CD4-positive, alpha-beta T cell (primary cell): ENCODE measurements at regions of chr10 and their contacts with region 1.

Region 1: DNA sequence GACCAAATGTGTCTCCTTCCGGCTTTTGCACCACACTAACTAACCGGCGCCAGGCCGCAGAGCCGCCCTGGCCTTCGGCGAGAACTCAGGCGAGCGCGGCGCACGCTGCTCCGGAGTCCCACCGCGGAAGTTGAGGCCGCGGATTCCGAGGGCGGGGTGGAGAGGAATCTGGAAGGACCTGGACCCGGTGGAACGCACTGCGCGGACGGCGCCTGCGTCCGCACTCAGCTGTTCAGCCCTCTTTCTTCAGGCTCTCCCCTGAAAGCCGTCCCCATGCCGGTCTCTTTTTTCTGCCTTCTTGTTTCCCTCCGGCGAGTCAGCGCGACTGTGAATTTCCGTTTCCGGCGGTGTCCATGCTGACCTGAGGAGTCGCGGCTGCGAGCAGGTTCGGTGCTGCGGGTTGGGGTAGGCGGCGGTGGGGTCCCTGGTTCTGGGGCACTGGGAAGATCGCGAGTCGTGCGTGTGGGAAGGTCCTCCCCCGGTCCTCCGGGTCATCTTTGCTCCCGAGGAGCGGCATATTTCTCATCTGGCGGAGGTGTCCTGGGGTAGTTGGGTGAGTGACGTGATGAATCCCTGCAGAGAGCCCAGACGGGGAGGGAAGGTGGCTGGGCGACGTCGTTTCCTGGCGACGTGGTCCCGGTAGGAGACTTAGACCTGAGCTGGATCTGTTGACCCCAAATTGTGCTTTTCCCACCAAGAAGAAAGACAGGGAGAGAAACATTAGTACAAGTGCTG is at the start of gene BMS1:
- DNase-seq: peak; percentile 79 to 93 (median 85)
- ATAC-seq: peak; percentile 85
- H3K4me3 ChIP-seq: peak within 1 kb of the TSS; percentile 65
- H3K4me3 Mint-ChIP-seq: peak within 1 kb of the TSS; percentile 99
- H3K27ac ChIP-seq: peak within 1 kb of the TSS; percentile 65
- H3K27ac Mint-ChIP-seq: peak within 1 kb of the TSS; percentile 88
- H3K4me1 ChIP-seq: peaks cover 16% of the 10 kb centered on the region
- H3K4me1 Mint-ChIP-seq: peaks cover 34% of the 10 kb centered on the region
- H3K27me3 ChIP-seq: no peaks in the 10 kb centered on the region
- H3K27me3 Mint-ChIP-seq: peaks cover 3% of the 10 kb centered on the region
- CTCF ChIP-seq: no peak
- total RNA-seq, gene BMS1: 13.8 to 15.3 TPM

Region 2: DNA sequence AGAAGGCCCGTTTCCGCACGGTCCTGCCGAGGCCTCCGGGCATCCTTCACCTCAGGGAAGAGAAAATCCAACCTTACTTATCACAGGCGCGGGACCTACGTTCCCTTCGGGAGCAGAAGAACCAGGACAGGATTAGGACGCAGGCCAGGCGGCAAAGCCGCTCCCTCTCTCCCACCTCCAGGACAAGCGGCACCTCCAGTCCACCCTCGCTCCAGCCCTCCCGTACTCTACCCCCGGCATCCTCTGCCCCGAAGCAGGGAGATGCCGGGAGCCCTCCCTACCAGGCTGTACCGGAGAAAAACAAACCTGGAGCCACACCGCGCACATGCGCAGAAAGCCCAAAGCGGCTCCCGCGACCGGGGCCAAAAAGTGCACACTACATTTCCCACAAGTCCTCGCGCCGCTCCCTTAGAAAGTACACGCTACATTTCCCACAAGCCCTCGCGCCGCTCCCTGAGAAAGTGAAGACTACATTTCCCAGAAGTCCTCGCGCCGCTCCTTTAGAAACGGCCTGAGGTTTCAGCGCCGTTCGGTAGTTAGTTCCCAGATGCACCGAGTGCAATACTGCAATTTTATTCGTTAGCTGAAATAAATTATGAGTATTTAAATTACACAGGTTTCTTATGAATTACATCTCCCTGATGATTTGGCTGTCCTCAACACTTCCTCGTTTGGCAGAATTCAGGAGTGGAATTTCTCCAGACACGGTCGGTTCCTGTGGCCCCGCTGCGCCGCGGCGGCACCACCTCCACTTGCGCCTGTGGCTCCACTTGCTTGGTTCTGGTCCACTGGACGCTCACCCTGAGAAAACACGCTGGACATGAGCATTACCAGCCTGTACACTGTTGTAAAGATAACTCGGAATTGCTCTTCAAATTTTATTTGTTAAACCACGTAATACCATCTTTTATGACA is 229.9 kb before region 1 on chr10:
- CTCF ChIA-PET with region 1: no interaction called
- POLR2A ChIA-PET with region 1: no interaction called
- intact Hi-C with region 1: loop called in 1 of 2 experiments (anchors 1 kb)
- DNase-seq: peak; percentile 87 to 97 (median 94)
- ATAC-seq: peak; percentile 95
- H3K4me3 ChIP-seq: peak overlapping the region; percentile 85
- H3K4me3 Mint-ChIP-seq: peak overlapping the region; percentile 94
- H3K27ac ChIP-seq: peak overlapping the region; percentile 58 to 75
- H3K27ac Mint-ChIP-seq: peak overlapping the region; percentile 87
- H3K4me1 ChIP-seq: peaks cover 23% of the 10 kb centered on the region
- H3K4me1 Mint-ChIP-seq: peaks cover 46% of the 10 kb centered on the region
- H3K27me3 ChIP-seq: no peaks in the 10 kb centered on the region
- H3K27me3 Mint-ChIP-seq: no peaks in the 10 kb centered on the region
- CTCF ChIP-seq: no peak

Region 3: GRCh38 chr10:42638055-42638820 is 144.4 kb before region 1 on chr10 and contains the start of gene ZNF33B:
- CTCF ChIA-PET with region 1: no interaction called
- POLR2A ChIA-PET with region 1: interaction called, 7 read pairs
- intact Hi-C with region 1: loop called (anchors 2 kb)
- DNase-seq: peak; percentile 89 to 97 (median 94)
- ATAC-seq: peak; percentile 91
- H3K4me3 ChIP-seq: peak within 1 kb of the TSS; percentile 71
- H3K4me3 Mint-ChIP-seq: peak within 1 kb of the TSS; percentile 96
- H3K27ac ChIP-seq: peak within 1 kb of the TSS; percentile 91 to 92
- H3K27ac Mint-ChIP-seq: peak within 1 kb of the TSS; percentile 97
- H3K4me1 ChIP-seq: peaks cover 18% of the 10 kb centered on the region
- H3K4me1 Mint-ChIP-seq: peaks cover 52% of the 10 kb centered on the region
- H3K27me3 ChIP-seq: no peaks in the 10 kb centered on the region
- H3K27me3 Mint-ChIP-seq: no peaks in the 10 kb centered on the region
- CTCF ChIP-seq: no peak
- total RNA-seq, gene ZNF33B: 26.6 to 27.0 TPM

Region 4: GRCh38 chr10:42769653-42770052 is 13.0 kb before region 1 on chr10:
- CTCF ChIA-PET with region 1: no interaction called
- POLR2A ChIA-PET with region 1: no interaction called
- intact Hi-C with region 1: no loop called
- DNase-seq: no peak
- ATAC-seq: no peak
- H3K4me3 ChIP-seq: no peak overlapping the region
- H3K4me3 Mint-ChIP-seq: no peak overlapping the region
- H3K27ac ChIP-seq: no peak overlapping the region
- H3K27ac Mint-ChIP-seq: no peak overlapping the region
- H3K4me1 ChIP-seq: no peaks in the 10 kb centered on the region
- H3K4me1 Mint-ChIP-seq: no peaks in the 10 kb centered on the region
- H3K27me3 ChIP-seq: peaks cover 6 to 10% of the 10 kb centered on the region in 2 experiments
- H3K27me3 Mint-ChIP-seq: peaks cover 48% of the 10 kb centered on the region
- CTCF ChIP-seq: no peak

Region 5: DNA sequence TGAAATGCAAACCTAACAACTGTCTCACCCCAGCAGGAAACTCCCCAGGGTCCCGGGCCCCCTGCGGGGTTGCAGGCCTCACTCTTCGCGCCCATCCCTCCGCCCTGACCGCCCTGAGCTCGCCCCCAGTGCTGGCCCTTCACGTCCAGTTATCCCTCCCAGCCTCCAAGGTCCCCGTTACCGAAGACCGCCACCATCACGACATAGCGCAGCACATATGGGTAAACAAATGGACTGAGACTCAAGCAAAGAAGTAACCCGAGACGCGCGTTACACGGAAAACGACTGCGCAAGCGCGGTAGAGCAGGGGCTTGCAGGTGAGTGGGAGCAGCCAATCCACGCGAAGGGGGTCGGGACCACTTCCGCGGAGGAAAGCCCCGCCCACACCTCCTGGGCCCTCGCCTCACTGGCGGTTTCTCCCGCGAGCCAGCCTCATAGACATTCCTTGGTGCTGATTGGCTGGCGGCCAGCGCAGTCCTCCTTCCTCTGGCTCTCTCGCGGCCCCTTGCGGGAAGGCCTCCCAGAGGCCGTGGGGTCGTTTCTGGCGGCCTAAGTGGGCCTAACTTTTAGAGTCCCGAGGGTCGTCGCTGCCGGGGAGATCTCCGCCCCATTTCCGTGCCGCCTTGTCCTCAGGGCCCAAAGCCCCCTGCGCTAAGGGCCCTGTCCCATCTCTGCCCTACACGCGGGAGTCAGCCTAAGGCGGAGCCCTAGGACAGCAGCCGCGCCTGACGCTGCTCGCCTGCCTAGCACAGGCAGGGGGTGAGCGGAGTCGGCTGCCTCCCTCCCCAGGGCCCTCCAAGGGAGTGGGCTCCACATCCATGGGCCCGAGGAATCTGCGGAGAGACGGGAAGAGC is 579.6 kb after region 1 on chr10:
- CTCF ChIA-PET with region 1: no interaction called
- POLR2A ChIA-PET with region 1: no interaction called
- intact Hi-C with region 1: loop called in 1 of 2 experiments (anchors 10 kb)
- DNase-seq: peak; percentile 93 to 99 (median 98)
- ATAC-seq: peak; percentile 98
- H3K4me3 ChIP-seq: peak overlapping the region; percentile 82
- H3K4me3 Mint-ChIP-seq: peak overlapping the region; percentile 97
- H3K27ac ChIP-seq: peak overlapping the region; percentile 88 to 97
- H3K27ac Mint-ChIP-seq: peak overlapping the region; percentile 97
- H3K4me1 ChIP-seq: peaks cover 22% of the 10 kb centered on the region
- H3K4me1 Mint-ChIP-seq: peaks cover 32% of the 10 kb centered on the region
- H3K27me3 ChIP-seq: no peaks in the 10 kb centered on the region
- H3K27me3 Mint-ChIP-seq: no peaks in the 10 kb centered on the region
- CTCF ChIP-seq: peak; percentile 64

Region 6: GRCh38 chr10:43606322-43607198 is 823.9 kb after region 1 on chr10 and contains the start of gene ZNF485:
- CTCF ChIA-PET with region 1: no interaction called
- POLR2A ChIA-PET with region 1: no interaction called
- intact Hi-C with region 1: loop called in 1 of 2 experiments (anchors 10 kb)
- DNase-seq: peak; percentile 42 to 77 (median 60)
- ATAC-seq: peak; percentile 87
- H3K4me3 ChIP-seq: peak within 1 kb of the TSS; percentile 81
- H3K4me3 Mint-ChIP-seq: peak within 1 kb of the TSS; percentile 89
- H3K27ac ChIP-seq: no peak within 1 kb of the TSS
- H3K27ac Mint-ChIP-seq: peak within 1 kb of the TSS; percentile 47
- H3K4me1 ChIP-seq: peaks cover 15% of the 10 kb centered on the region
- H3K4me1 Mint-ChIP-seq: peaks cover 41% of the 10 kb centered on the region
- H3K27me3 ChIP-seq: no peaks in the 10 kb centered on the region
- H3K27me3 Mint-ChIP-seq: no peaks in the 10 kb centered on the region
- CTCF ChIP-seq: no peak
- total RNA-seq, gene ZNF485: 0.75 to 1.2 TPM

Region 7: GRCh38 chr10:43648398-43649184 is 866.0 kb after region 1 on chr10 and contains the start of gene ZNF32:
- CTCF ChIA-PET with region 1: no interaction called
- POLR2A ChIA-PET with region 1: no interaction called
- intact Hi-C with region 1: loop called in 1 of 2 experiments (anchors 2 kb)
- DNase-seq: peak; percentile 64 to 91 (median 76)
- ATAC-seq: peak; percentile 98
- H3K4me3 ChIP-seq: peak within 1 kb of the TSS; percentile 73
- H3K4me3 Mint-ChIP-seq: peak within 1 kb of the TSS; percentile 96
- H3K27ac ChIP-seq: peak within 1 kb of the TSS in 1 of 2 donors; percentile 71
- H3K27ac Mint-ChIP-seq: peak within 1 kb of the TSS; percentile 96
- H3K4me1 ChIP-seq: peaks cover 17% of the 10 kb centered on the region
- H3K4me1 Mint-ChIP-seq: peaks cover 27% of the 10 kb centered on the region
- H3K27me3 ChIP-seq: no peaks in the 10 kb centered on the region
- H3K27me3 Mint-ChIP-seq: peaks cover 3% of the 10 kb centered on the region
- CTCF ChIP-seq: no peak
- total RNA-seq, gene ZNF32: 18.7 to 19.5 TPM

Region 8: GRCh38 chr10:44557596-44558191 is 1775.1 kb after region 1 on chr10:
- CTCF ChIA-PET with region 1: no interaction called
- POLR2A ChIA-PET with region 1: no interaction called
- intact Hi-C with region 1: no loop called
- DNase-seq: no peak
- ATAC-seq: no peak
- H3K4me3 ChIP-seq: no peak overlapping the region
- H3K4me3 Mint-ChIP-seq: no peak overlapping the region
- H3K27ac ChIP-seq: no peak overlapping the region
- H3K27ac Mint-ChIP-seq: no peak overlapping the region
- H3K4me1 ChIP-seq: no peaks in the 10 kb centered on the region
- H3K4me1 Mint-ChIP-seq: no peaks in the 10 kb centered on the region
- H3K27me3 ChIP-seq: peaks cover 0 to 2% of the 10 kb centered on the region in 2 experiments
- H3K27me3 Mint-ChIP-seq: peaks cover 4% of the 10 kb centered on the region
- CTCF ChIP-seq: no peak